Breast epithelium (tissue), 4 donors: ENCODE measurements at regions of chr11 and their contacts with region 1.

Region 1: GRCh38 chr11:33344611-33345010 is 87.4 kb downstream of the HIPK3 start:
- DNase-seq: no peak
- H3K4me3 ChIP-seq: no peak overlapping the region
- H3K27ac ChIP-seq: no peak overlapping the region
- H3K4me1 ChIP-seq: no peaks in the 10 kb centered on the region
- H3K27me3 ChIP-seq: no peaks in the 10 kb centered on the region
- CTCF ChIP-seq: no peak
- POLR2A ChIP-seq: no peak

Region 2: GRCh38 chr11:32838505-32838904 is 506.1 kb before region 1 on chr11:
- intact Hi-C with region 1: no loop called
- DNase-seq: no peak
- H3K4me3 ChIP-seq: no peak overlapping the region
- H3K27ac ChIP-seq: no peak overlapping the region
- H3K4me1 ChIP-seq: no peaks in the 10 kb centered on the region
- H3K27me3 ChIP-seq: no peaks in the 10 kb centered on the region
- CTCF ChIP-seq: no peak
- POLR2A ChIP-seq: no peak

Region 3: DNA sequence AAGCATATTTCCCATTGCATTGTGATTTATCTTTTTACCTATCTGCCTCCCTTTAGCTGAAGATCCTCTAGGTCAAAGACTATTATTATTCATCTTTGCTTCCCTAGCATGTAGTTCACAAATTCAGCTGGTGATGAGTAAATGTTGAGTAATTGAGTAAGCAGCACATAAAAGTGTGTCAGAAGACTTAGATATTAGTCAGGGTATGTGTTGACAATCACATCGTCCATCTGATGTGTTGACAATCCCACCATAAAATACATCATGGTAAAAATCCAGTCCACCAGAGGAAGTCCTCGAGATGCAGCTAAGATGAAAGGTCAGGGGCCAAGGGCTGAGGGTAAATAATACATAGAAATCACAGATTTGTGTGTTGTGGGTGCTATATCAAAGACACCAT is 1036.1 kb after region 1 on chr11:
- intact Hi-C with region 1: loop called (anchors 5 kb)
- DNase-seq: no peak
- H3K4me3 ChIP-seq: no peak overlapping the region
- H3K27ac ChIP-seq: no peak overlapping the region
- H3K4me1 ChIP-seq: no peaks in the 10 kb centered on the region
- H3K27me3 ChIP-seq: no peaks in the 10 kb centered on the region
- CTCF ChIP-seq: no peak
- POLR2A ChIP-seq: no peak